GM23248 (cell line): ENCODE measurements at regions of chr11 and their contacts with region 1.

Region 1: DNA sequence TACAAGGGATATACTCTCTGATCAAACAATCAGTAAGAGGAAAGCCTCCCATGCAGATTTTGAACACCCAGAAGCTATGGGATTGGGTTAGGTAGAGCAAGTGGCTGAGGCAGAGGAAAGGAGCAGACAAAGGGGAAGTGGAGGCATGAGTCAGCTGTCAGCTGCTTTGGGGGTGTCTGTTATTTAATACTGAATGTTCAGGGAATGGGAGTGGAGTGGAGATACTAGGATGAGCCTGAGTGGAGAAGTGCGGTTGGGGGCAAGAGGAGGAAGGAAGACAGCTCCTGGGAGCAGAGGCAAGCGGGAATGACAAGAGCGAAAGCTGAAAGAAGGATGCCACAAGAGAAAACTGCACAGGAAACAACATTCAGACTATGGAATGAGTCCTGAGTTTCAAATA is 22.7 kb upstream of the TMPRSS5 start:
- DNase-seq: no peak
- H3K4me3 ChIP-seq: no peak overlapping the region
- H3K27ac ChIP-seq: no peak overlapping the region
- H3K4me1 ChIP-seq: peaks cover 11% of the 10 kb centered on the region
- H3K27me3 ChIP-seq: no peaks in the 10 kb centered on the region

Region 2: DNA sequence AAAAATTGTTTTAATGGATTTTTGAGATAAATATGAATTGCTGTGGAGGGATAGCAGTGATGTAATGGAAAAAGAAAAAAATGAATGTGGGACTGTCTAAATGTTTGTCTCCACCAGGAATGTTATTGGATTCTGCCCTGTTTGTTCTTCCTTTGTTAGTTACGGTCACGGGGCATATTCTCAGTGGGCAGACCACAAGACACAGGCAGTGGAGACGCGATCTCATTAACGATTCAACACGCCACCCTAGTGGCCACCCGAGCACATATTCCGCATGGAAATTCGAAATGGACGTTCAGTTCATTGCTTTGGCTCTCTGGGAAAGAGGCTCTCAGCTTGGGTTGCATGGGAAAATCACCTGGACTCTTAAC is 566.2 kb before region 1 on chr11:
- in situ Hi-C with region 1: no loop called
- DNase-seq: no peak
- H3K4me3 ChIP-seq: no peak overlapping the region
- H3K27ac ChIP-seq: no peak overlapping the region
- H3K4me1 ChIP-seq: no peaks in the 10 kb centered on the region
- H3K27me3 ChIP-seq: no peaks in the 10 kb centered on the region

Region 3: DNA sequence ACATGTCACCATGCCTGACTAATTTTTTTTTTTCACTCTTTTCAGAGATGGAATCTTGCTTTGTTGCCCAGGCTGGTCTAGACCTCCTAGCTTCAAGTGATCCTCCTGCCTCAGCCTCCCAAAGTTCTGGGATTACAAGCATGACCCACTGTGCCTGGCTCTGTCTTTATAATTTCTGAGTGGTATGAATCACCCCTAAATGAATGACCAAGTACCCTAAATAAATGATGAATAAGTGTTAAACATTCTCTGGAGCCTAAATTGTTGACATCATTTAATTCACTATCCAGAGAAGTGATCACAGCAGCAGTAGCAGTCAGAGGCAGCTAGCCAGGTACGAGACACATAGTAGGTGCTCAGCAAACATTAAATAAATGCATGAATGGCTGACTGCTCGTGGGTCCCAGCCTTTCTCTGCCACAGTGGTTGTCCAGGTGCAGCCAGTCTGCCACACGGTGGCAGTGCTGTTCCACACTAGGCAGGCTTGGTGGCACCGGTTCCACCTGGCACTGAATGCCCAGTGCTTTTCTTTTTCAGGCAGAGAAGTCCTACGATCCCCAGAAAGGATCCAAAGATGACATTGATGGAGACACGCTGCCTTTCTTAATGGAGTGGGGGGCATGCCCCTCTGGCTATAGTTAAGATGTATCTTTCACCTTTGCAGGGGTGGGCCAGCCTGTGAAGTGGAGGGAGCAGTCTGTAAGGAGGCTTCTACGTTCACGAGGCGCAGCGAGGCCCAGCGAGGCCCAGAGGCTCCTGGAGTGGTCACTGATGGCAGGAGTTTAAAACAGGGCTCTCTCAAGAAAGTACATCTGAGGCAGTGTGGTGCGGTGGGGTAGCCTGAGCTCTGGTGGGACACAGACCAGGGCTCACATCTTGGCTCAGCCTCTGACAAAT is 423.1 kb before region 1 on chr11:
- in situ Hi-C with region 1: loop called (anchors 5 kb)
- DNase-seq: peak; percentile 81
- H3K4me3 ChIP-seq: no peak overlapping the region
- H3K27ac ChIP-seq: no peak overlapping the region
- H3K4me1 ChIP-seq: no peaks in the 10 kb centered on the region
- H3K27me3 ChIP-seq: peaks cover 4% of the 10 kb centered on the region; the same call in 1 of the 2 replicates

Region 4: DNA sequence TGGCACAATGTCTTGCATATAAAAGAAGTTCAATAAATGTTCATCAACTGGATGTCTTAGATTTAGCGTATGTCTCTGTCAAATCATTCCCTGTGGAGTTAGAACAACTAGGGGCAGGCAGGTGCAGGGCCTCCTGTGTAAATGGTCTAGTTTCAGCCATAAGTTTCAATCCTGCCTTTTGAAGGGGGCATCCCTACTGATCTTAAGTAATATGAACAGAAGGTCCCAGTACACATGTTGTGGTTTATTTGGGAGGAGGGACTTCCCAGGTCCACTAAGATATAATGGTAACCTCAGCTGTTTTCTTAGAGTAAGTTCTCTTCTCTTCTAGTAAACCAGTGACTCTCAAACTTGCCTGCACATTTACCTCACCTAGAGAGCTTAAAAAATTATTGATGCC is 394.6 kb before region 1 on chr11:
- in situ Hi-C with region 1: no loop called
- DNase-seq: no peak
- H3K4me3 ChIP-seq: no peak overlapping the region
- H3K27ac ChIP-seq: no peak overlapping the region
- H3K4me1 ChIP-seq: no peaks in the 10 kb centered on the region
- H3K27me3 ChIP-seq: no peaks in the 10 kb centered on the region